Caco-2 (cell line): ENCODE measurements at regions of chr5 and their contacts with region 1.

Region 1: GRCh38 chr5:130109152-130109551 is 204.9 kb downstream of the CHSY3 start:
- DNase-seq: peak in 1 of 2 experiments; percentile 16
- H3K4me3 ChIP-seq: no peak overlapping the region
- H3K4me3 Mint-ChIP-seq: no peak overlapping the region
- H3K27ac Mint-ChIP-seq: no peak overlapping the region
- H3K4me1 ChIP-seq: no peaks in the 10 kb centered on the region
- H3K4me1 Mint-ChIP-seq: no peaks in the 10 kb centered on the region
- H3K27me3 ChIP-seq: no peaks in the 10 kb centered on the region
- H3K27me3 Mint-ChIP-seq: no peaks in the 10 kb centered on the region
- CTCF ChIP-seq: peak; percentile 60 to 72

Region 2: DNA sequence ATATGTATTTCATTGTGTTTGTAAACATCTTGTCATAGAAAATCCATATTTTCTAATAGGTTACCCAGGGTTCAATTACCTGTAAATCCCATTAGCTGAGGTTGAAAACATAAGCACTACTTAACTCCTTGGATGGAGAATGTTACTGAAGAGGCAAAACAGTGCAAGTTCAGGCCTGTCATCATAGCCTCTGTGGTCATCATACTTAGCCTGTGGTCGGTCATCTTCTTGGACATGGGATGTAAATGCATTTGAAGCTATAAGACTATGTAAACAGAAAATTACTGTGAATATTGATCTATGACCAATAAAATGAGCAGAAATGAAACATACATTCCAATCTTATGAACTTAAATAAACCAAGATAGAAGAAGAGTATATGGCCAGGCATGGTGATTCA is 40.2 kb before region 1 on chr5:
- CTCF ChIA-PET with region 1: no interaction called
- POLR2A ChIA-PET with region 1: no interaction called
- intact Hi-C with region 1: no loop called
- DNase-seq: no peak
- H3K4me3 ChIP-seq: no peak overlapping the region
- H3K4me3 Mint-ChIP-seq: no peak overlapping the region
- H3K27ac Mint-ChIP-seq: no peak overlapping the region
- H3K4me1 ChIP-seq: no peaks in the 10 kb centered on the region
- H3K4me1 Mint-ChIP-seq: no peaks in the 10 kb centered on the region
- H3K27me3 ChIP-seq: no peaks in the 10 kb centered on the region
- H3K27me3 Mint-ChIP-seq: no peaks in the 10 kb centered on the region
- CTCF ChIP-seq: no peak

Region 3: DNA sequence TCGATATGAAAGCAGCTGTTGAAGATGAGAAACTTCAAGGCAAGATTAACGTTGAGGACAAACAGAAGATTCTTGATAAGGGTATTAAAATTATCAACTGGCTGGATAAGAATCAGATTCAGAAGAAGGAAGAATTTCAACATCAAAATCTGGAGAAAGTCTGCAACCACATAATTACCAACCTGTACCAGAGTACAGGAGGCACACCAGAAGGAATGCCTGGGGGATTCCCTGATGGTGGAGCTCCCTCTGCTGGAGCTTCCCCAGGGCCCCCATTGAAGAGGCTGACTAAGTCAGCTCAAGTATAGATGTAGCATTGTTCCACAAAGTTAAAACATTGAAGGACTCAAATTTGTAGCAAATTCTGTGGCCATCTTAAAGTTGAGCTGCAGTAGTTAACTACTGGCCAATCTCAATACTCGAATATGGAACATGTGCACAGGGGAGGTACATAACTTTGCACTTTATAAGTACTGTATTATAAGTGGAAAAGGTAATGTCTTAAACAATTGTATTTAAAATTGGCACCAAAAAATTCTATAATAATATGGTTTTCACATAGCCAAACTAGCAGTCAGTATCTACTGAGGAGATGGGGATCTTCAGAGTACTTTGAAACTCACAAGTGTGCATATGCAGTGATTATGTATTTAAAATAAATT is 32.6 kb after region 1 on chr5:
- CTCF ChIA-PET with region 1: interaction called, 3 read pairs
- POLR2A ChIA-PET with region 1: no interaction called
- intact Hi-C with region 1: loop called (anchors 1 kb)
- DNase-seq: peak; percentile 52 to 67
- H3K4me3 ChIP-seq: no peak overlapping the region
- H3K4me3 Mint-ChIP-seq: no peak overlapping the region
- H3K27ac Mint-ChIP-seq: no peak overlapping the region
- H3K4me1 ChIP-seq: no peaks in the 10 kb centered on the region
- H3K4me1 Mint-ChIP-seq: no peaks in the 10 kb centered on the region
- H3K27me3 ChIP-seq: no peaks in the 10 kb centered on the region
- H3K27me3 Mint-ChIP-seq: no peaks in the 10 kb centered on the region
- CTCF ChIP-seq: peak; percentile 48 to 89

Region 4: DNA sequence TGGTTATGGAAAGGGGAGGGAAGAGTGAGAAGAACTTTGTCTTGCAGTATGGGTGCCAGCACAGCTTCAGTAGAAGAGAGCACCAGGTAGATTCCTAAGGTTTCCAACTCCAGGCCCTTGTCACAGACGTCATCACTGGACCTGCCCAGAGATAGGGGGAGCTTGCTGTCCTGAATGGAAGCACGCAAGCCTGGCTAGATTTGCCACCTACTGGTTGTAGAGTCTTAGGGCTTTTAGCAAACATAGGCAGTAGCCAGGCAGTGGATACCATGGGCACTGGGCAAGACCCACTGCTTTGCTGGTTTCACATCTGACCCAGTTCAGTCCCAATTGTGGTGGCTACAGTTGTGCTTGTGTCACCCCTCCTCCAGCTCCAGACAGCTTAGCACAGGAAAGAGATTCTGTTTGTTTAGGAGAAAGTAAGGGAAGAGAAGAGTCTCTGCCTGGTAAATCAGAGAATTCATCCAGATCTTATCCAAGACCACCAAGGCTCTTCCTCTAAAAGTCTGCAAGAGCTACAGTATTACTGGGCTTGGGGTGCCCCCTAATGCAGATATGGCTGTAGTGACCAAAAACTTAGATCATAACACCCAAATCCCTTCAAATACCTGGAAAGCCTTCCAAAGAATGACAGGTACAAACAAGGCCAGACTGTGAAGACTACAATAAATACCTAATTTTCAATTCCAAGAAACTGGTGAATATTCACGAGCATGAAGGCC is 897.0 kb after region 1 on chr5:
- CTCF ChIA-PET with region 1: no interaction called
- POLR2A ChIA-PET with region 1: no interaction called
- intact Hi-C with region 1: loop called (anchors 5 kb)
- DNase-seq: peak in 1 of 2 experiments; percentile 17
- H3K4me3 ChIP-seq: no peak overlapping the region
- H3K4me3 Mint-ChIP-seq: no peak overlapping the region
- H3K27ac Mint-ChIP-seq: no peak overlapping the region
- H3K4me1 ChIP-seq: no peaks in the 10 kb centered on the region
- H3K4me1 Mint-ChIP-seq: no peaks in the 10 kb centered on the region
- H3K27me3 ChIP-seq: no peaks in the 10 kb centered on the region
- H3K27me3 Mint-ChIP-seq: peaks cover 10% of the 10 kb centered on the region
- CTCF ChIP-seq: peak; percentile 27 to 32